Mammary epithelial cell (primary cell): ENCODE measurements at regions of chr1 and their contacts with region 1.

Region 1: DNA sequence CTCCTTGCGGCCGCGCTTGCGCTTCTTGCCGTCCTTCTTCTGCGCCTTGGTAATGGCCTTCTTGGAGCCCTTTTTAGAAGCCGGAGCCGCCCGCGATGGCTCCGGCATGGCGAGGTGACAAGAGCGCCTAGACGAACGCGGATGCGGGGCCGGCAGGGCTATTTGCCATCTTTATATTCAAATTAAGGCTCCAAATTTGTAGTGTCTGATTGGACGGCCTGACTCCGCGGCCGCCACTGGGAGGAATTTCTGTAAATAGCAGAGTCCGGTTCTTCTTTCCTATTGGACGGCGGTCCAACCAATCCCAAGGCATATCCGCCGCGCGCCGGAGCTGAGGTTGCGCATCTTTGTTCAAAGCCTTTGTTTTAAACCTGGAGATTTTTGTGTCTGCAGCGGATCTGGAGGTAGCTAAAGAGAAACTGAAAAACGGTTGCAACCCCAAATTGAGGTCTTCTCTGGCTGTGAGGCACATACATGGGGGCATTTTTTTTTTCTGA is 22.6 kb upstream of the RNF187 start:
- DNase-seq: peak; percentile 41
- H3K4me3 ChIP-seq: peak overlapping the region in 2 of 3 experiments; percentile 23 to 40
- H3K27ac ChIP-seq: no peak overlapping the region
- H3K4me1 ChIP-seq: peaks cover 13% of the 10 kb centered on the region
- H3K27me3 ChIP-seq: peaks cover 11% of the 10 kb centered on the region
- CTCF ChIP-seq: no peak

Region 2: DNA sequence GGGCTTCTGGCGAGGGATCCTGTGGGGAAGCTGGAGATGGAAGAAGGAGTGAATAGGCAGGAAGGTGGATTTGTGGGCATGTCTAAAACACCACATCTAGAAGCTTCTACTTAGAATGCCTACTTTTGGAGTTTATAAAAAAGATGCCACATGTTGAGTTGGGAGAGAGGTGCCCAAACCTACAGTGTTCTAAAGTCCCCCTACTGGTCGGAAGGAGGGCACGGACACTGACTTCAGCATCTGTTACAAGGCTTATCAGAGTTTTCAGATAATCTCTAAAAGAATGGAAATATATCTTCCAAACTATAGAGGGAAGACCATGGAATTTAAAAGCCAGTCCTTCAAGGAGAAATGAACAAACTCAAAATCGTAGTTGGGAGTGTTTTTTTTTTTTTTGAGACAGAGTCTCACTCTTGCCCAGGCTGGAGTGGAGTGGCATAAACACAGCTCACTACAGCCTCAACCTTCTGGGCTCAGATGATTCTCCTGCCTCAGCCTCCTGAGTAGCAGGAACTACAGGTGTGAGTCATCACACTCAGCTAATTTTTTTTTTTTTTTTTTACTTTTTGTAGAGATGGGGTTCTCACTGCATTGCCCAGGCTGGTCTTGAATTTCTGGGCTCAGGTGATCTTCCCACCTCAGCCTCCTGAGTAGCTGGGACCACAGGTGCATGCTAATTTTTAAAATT is 284.1 kb before region 1 on chr1:
- CTCF ChIA-PET with region 1: no interaction called
- dilution Hi-C with region 1: loop called (anchors 10 kb)
- in situ Hi-C with region 1: no loop called
- intact Hi-C with region 1: no loop called
- DNase-seq: no peak
- H3K4me3 ChIP-seq: no peak overlapping the region
- H3K27ac ChIP-seq: no peak overlapping the region
- H3K4me1 ChIP-seq: peaks cover 2% of the 10 kb centered on the region
- H3K27me3 ChIP-seq: no peaks in the 10 kb centered on the region
- CTCF ChIP-seq: peak in 1 of 2 donors; percentile 38

Region 3: DNA sequence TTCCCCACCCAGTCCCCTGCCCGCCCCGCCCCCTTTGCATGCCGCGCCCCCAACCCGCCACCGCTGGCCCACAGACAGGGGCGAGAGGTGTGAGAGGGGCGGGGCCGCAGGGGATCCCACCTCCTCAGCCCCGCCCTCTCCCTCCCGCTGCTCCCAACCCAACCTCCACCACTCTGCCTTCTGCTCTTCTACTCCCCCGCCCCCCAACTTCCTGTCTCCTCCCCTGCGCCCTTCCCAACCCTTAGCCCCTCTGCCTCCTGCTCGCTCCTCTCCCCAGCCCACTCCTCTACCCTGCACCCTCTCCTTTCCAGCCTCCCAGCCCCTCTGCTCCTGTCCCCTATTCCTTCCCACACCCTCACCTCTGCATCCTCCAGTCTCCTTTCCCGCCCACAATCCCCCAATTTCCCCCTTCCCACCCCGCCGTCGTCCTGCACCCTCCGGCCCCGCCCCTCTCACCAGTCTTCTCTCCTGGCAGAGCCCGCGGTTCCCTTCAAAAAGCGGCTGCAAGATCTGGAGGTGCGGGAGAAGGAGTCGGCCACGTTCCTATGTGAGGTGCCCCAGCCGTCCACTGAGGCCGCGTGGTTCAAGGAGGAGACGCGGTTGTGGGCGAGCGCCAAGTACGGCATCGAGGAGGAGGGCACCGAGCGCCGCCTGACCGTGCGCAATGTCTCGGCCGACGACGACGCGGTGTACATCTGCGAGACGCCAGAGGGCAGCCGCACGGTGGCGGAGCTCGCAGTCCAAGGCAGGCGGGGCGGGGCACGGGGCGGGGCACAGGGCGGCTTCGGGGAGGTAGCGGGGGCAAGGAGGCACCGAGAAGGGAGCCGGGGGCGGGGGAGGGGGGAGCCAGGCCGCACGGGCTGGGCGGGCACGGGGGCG is 251.3 kb before region 1 on chr1:
- CTCF ChIA-PET with region 1: no interaction called
- dilution Hi-C with region 1: no loop called
- in situ Hi-C with region 1: no loop called
- intact Hi-C with region 1: no loop called
- DNase-seq: peak; percentile 83
- H3K4me3 ChIP-seq: peak overlapping the region; percentile 32 to 80 (median 57)
- H3K27ac ChIP-seq: no peak overlapping the region
- H3K4me1 ChIP-seq: peaks cover 9% of the 10 kb centered on the region
- H3K27me3 ChIP-seq: no peaks in the 10 kb centered on the region
- CTCF ChIP-seq: peak; percentile 34 to 73

Region 4: GRCh38 chr1:228500901-228501871 is 36.7 kb after region 1 on chr1:
- CTCF ChIA-PET with region 1: no interaction called
- dilution Hi-C with region 1: no loop called
- in situ Hi-C with region 1: no loop called
- intact Hi-C with region 1: no loop called
- DNase-seq: peak; percentile 81
- H3K4me3 ChIP-seq: no peak overlapping the region
- H3K27ac ChIP-seq: no peak overlapping the region
- H3K4me1 ChIP-seq: peaks cover 9% of the 10 kb centered on the region
- H3K27me3 ChIP-seq: no peaks in the 10 kb centered on the region
- CTCF ChIP-seq: peak; percentile 92 to 95